ENCODE measurements at regions of chr12 and their contacts with region 1.

Region 1: DNA sequence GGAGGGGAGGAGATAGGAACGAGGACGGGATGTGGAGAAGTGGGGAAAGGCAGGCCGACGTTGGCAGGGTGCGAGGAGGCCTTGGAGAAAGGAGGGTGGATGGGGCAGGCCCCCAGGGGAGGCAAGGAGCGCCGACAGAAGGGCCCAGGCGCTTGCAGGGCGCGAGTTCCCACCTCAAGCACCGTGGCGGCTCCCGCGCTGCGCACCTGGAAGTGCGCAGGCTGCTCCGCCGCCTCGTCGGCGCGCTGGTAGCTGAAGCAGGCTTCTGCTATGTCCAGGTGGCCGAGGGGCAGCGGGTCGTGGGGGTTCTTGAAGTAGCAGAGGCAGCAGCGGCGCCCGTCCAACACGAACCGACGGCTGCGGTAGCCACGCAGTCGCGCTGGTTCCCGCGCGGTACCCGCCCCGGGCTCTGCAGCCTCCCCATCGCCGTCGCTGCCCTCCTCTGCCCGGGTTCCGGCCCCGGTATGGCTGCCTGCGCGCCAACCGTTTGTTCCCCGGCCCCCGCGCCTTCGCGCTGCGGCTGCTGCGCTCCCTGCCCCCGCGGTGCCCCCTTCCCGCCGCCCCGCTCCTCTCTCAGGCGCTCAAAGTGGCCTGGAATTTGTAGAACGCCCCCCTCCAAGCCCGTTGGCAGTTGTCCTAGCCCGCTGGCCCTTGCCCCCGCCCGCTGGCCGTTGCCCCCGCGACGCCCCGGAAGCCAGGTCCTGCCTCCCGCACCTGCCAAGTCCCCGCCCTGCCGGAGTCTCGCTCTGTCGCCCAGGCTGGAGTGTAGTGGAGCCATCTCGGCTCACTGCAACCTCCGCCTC is 1.1 kb upstream of the ACTR6 start:
- DNase-seq: peak; percentile 92
- H3K4me3 ChIP-seq: peak overlapping the region; percentile 72
- H3K27ac ChIP-seq: peak overlapping the region; percentile 78
- H3K4me1 ChIP-seq: peaks cover 4% of the 10 kb centered on the region
- H3K27me3 ChIP-seq: no peaks in the 10 kb centered on the region
- CTCF ChIP-seq: no peak

Region 2: GRCh38 chr12:100077367-100077766 is 122.2 kb before region 1 on chr12:
- intact Hi-C with region 1: loop called (anchors 10 kb)
- DNase-seq: no peak
- H3K4me3 ChIP-seq: no peak overlapping the region
- H3K27ac ChIP-seq: no peak overlapping the region
- H3K4me1 ChIP-seq: no peaks in the 10 kb centered on the region
- H3K27me3 ChIP-seq: no peaks in the 10 kb centered on the region
- CTCF ChIP-seq: no peak

Region 3: DNA sequence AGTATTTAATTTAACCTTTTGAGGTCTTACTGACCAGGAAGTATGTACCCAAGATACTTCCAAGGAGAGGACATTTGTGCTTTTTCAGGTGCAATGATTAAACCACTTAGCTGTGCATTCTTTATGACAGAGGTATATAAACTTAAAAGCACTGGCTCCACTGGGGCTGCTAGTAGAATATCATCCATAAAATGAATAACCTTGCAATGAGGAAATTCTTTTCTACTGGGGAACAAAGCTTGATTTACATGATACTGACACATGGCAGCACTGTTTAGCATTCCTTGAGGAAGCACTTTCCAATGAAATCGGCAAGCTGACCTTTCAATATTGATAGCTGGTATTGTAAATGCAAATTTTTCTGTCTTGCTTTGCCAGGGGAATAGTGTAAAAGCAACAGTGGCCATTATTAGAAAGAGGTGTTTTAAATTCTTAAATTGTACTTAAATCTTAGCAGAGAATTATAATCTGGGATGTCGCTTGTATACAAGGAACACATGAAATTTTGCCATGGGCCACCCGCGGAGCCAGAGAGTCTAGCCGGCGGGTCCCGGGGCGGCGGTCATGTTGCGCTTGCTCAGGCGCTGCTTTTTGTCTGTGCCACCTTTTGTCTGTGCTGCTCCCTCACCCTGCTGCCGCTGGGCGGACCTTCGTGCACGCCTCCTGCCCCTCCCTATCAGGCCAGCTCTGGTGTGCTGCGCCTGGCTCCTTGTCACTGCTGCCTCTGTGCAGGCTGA is 36.0 kb before region 1 on chr12:
- intact Hi-C with region 1: loop called (anchors 5 kb)
- DNase-seq: peak; percentile 89
- H3K4me3 ChIP-seq: peak overlapping the region; percentile 29
- H3K27ac ChIP-seq: peak overlapping the region; percentile 74
- H3K4me1 ChIP-seq: no peaks in the 10 kb centered on the region
- H3K27me3 ChIP-seq: no peaks in the 10 kb centered on the region
- CTCF ChIP-seq: no peak

Region 4: DNA sequence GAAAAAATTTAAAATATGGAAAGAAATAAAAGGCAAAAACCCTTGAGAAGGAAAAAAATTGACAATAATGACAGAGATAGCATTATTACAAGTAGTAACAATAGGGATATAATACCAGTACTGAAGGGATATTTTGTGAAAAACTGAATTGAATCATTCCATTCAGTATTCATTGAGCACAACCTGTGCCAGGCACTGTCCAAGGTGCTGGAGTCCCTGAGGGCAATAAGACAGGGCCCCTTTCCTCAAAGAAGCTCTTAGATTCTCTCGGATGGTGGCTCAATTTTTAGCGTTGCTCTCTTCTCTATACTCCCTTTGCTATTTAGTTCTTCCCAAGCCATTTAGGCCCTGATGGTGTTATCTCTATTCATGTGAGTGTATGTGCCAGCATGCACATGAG is 339.7 kb after region 1 on chr12:
- intact Hi-C with region 1: no loop called
- DNase-seq: peak; percentile 29
- H3K4me3 ChIP-seq: no peak overlapping the region
- H3K27ac ChIP-seq: no peak overlapping the region
- H3K4me1 ChIP-seq: no peaks in the 10 kb centered on the region
- H3K27me3 ChIP-seq: no peaks in the 10 kb centered on the region
- CTCF ChIP-seq: no peak